RWPE1 (cell line): ENCODE measurements at regions of chr10 and their contacts with region 1.

Region 1: DNA sequence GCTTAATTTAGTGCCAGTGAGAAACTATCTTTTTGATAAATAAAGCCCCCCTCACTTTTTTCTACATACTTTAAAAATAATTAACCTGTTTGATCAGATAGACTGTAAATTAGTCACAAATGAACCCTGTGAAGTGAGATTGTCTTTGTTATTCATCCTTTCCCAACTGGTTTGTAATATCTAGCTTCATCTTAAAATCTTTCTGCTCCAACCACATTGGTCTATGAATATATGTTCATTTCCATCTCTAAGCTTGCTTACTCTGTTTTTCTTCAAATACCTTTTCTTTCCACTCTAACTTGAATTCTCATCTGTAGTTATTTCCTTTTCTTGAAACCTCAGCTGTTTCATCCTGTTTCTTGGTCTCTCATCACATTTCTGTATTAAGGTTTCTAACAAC is 12.1 kb downstream of the MARCHF5 start:
- DNase-seq: no peak
- H3K27ac ChIP-seq: no peak overlapping the region
- CTCF ChIP-seq: no peak

Region 2: DNA sequence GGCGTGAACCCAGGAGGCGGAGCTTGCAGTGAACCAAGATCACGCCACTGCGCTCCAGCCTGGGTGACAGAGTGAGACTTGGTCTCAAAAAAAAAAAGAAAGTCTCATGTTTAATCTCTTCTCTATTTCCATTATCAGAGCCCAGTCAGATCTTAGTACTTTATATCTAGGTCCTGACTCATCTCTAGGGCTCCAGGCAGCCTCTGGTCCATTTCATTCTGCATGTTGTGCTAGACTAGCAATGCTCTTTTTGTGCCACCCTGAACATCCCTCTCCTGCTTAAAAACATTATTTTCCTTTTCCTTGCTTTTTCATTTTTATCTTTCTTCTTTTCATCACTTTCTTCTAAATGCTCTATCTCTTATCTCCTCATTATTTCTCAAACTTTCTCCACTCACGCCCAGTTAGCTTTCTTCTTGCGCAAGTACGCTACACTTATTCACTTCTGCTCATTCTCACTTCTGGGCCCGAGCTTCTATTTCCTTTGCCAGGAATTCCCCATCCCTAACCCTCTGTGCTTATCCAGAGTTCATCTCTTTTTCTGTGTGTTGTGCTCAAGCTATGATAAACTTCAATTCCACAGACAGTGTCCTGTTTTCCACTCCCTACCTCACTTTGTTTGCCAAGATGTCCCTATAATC is 315.6 kb before region 1 on chr10:
- CTCF ChIA-PET with region 1: no interaction called
- POLR2A ChIA-PET with region 1: no interaction called
- DNase-seq: no peak
- H3K27ac ChIP-seq: no peak overlapping the region
- CTCF ChIP-seq: no peak

Region 3: GRCh38 chr10:92342796-92343195 is 39.7 kb after region 1 on chr10:
- CTCF ChIA-PET with region 1: interaction called, 11 read pairs
- POLR2A ChIA-PET with region 1: no interaction called
- DNase-seq: no peak
- H3K27ac ChIP-seq: no peak overlapping the region
- CTCF ChIP-seq: no peak